Gastrocnemius medialis (tissue), 4 donors: ENCODE measurements at regions of chr21 and their contacts with region 1.

Region 1: DNA sequence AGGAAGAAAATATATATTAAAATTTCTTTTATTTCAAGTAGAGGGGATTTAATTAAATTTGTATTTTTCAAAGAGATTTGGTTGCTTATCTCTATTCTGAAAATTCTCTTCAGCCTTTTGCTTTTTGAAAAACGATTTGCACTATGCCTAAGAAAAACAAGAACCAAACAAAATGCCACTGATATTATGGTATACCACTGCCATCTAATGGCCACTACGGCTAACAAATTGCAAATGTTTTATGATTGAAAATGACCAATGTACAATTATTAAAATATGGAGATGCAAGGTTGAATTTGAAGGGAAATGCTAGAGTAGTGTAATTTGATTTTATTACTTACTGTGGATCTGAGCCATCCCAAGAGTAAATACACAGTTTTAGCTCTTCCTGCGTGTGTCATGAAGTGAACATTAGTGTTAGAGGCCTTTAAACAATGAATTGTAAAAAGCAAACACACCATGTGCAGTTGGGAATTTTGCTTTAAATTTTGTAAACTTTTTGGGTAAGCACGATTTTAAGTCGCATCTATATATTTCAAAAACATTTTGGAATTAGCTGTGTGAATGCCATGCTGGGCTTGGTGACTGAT is 137.4 kb upstream of the USP25 start:
- DNase-seq: no peak
- ATAC-seq: peak in 1 of 2 donors; percentile 51
- H3K4me3 ChIP-seq: no peak overlapping the region
- H3K27ac ChIP-seq: no peak overlapping the region
- H3K4me1 ChIP-seq: no peaks in the 10 kb centered on the region
- H3K27me3 ChIP-seq: no peaks in the 10 kb centered on the region
- CTCF ChIP-seq: peak; percentile 31 to 57 (median 49)
- POLR2A ChIP-seq: no peak

Region 2: GRCh38 chr21:14251336-14251735 is 1341.0 kb before region 1 on chr21:
- in situ Hi-C with region 1: loop called (anchors 10 kb)
- intact Hi-C with region 1: loop called (anchors 2 kb)
- DNase-seq: no peak
- ATAC-seq: no peak
- H3K4me3 ChIP-seq: no peak overlapping the region
- H3K27ac ChIP-seq: no peak overlapping the region
- H3K4me1 ChIP-seq: peaks cover 0 to 5% of the 10 kb centered on the region in 2 donors
- H3K27me3 ChIP-seq: no peaks in the 10 kb centered on the region
- CTCF ChIP-seq: no peak
- POLR2A ChIP-seq: no peak

Region 3: DNA sequence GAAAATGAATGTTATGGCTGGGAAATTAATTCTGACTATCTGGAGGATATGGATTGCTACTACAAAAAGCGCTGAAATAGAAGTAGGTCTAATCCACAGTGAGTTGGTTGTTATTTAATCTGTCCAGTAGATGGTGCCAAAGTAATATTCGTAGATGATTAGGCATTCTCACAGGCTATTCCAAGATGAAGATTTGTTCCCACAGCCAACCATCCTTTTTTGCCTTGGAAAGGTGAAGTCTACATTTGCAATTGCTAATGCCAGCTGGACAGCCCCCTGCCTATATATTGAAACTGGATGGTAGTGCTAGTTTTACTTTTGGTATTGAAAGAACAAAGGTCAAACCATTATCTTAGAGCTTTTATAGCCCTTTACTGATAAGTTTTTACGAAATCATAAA is 1332.6 kb before region 1 on chr21:
- in situ Hi-C with region 1: loop called (anchors 10 kb)
- intact Hi-C with region 1: no loop called
- DNase-seq: no peak
- ATAC-seq: peak; percentile 56 to 75
- H3K4me3 ChIP-seq: no peak overlapping the region
- H3K27ac ChIP-seq: no peak overlapping the region
- H3K4me1 ChIP-seq: no peaks in the 10 kb centered on the region
- H3K27me3 ChIP-seq: peaks cover 0 to 2% (median 0%) of the 10 kb centered on the region in 3 donors
- CTCF ChIP-seq: peak in 4 of 5 experiments; percentile 36 to 65 (median 46)
- POLR2A ChIP-seq: no peak

Region 4: DNA sequence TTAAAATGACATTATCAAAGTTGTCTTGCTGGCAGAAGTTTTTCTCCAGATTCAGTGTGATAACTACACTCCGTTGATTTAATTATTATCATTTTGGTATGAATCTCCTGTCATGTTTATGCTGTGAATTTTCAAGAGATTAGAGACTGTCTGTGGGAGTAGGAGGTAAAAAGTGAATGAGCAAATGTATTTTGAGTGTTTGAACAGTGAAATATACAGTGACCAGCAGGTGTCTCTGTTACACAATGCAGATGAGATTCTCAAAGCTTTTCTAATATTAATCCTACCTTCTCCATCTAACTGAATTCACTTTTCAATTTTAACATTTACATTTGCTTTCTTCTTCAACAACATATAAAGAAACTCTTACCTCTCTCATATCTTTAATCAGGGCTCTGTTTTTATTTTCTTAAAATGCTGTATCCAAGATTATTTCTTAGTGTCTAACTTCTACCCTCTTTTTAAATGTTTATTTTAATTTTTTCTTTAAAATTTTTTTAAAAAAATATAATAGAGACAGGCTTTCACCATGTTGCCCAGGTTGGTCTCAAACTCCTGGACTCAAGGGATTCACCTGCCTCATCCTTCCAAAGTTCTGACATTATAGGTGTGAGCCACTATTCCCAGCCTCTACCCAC is 1188.6 kb before region 1 on chr21:
- in situ Hi-C with region 1: loop called in 3 of 4 experiments (anchors 10 to 25 kb)
- intact Hi-C with region 1: loop called (anchors 5 kb)
- DNase-seq: no peak
- ATAC-seq: no peak
- H3K4me3 ChIP-seq: no peak overlapping the region
- H3K27ac ChIP-seq: no peak overlapping the region
- H3K4me1 ChIP-seq: no peaks in the 10 kb centered on the region
- H3K27me3 ChIP-seq: no peaks in the 10 kb centered on the region
- CTCF ChIP-seq: peak in 3 of 5 experiments; percentile 13 to 38 (median 31)
- POLR2A ChIP-seq: no peak

Region 5: GRCh38 chr21:14438211-14438610 is 1154.2 kb before region 1 on chr21:
- in situ Hi-C with region 1: loop called in 1 of 4 experiments (anchors 25 kb)
- intact Hi-C with region 1: no loop called
- DNase-seq: no peak
- ATAC-seq: no peak
- H3K4me3 ChIP-seq: no peak overlapping the region
- H3K27ac ChIP-seq: no peak overlapping the region
- H3K4me1 ChIP-seq: no peaks in the 10 kb centered on the region
- H3K27me3 ChIP-seq: no peaks in the 10 kb centered on the region
- CTCF ChIP-seq: no peak
- POLR2A ChIP-seq: no peak

Region 6: DNA sequence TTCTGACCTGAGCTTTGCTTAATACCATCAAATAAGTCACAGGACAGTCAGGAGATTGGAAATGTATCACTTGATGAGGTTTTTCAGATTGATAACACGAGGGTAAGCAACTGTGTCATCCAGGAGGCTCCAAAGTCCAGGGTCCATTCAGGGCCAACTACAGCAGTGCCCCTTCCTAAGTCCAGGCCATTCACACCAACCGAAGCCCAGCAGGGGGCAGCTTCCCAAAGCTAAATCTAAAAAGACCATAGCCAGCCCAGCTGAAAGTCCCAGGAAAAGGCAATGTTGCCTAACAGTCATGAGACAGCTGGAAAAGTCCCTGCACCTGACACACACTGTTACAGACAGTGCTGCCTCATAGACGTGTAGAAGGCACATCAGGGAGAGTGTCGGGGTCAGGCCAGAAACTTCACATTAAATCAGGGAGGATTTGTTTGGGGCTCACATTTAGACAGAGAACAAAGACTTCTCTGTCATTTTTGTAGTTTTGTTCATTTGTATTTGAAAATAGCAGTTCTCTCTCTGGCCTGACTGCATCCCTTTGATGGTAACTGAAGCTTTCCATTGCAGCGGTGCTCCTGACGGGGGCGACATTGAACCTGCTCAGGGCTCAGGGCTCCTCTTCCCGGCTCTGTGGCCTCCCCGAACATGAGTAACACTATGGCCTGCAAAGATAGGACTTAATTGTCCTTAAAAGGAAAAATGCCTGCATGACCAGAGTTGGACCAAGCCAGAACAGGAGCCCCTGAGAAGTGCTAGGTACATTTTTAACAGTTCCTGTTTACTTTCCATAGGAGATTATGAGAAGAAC is 728.0 kb before region 1 on chr21:
- in situ Hi-C with region 1: no loop called
- intact Hi-C with region 1: loop called (anchors 5 kb)
- DNase-seq: peak; percentile 59 to 76
- ATAC-seq: peak; percentile 97 to 98
- H3K4me3 ChIP-seq: no peak overlapping the region
- H3K27ac ChIP-seq: peak overlapping the region in 2 of 4 donors; percentile 8 to 34
- H3K4me1 ChIP-seq: peaks cover 13% of the 10 kb centered on the region in 2 donors
- H3K27me3 ChIP-seq: no peaks in the 10 kb centered on the region
- CTCF ChIP-seq: peak; percentile 41 to 74 (median 56)
- POLR2A ChIP-seq: no peak

Region 7: DNA sequence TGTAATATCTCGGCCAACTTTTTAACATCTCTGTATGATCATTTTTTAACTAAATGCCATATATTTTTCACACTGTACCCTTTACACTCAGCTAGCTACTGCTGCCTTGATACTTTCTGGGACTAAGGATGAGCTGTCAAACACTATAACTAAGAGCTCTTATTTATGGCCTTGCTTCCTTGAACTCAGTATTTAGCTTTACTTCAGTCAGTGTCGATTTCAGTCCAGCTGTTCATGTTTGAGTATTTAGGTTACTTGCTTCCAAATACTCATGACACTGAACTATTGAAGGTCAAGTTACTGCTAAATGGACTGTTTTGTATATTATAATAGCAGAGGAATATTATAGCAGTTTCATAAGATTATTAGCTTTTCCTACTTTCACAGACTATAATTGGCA is 111.6 kb after region 1 on chr21:
- in situ Hi-C with region 1: no loop called
- intact Hi-C with region 1: no loop called
- DNase-seq: no peak
- ATAC-seq: peak; percentile 67 to 82
- H3K4me3 ChIP-seq: no peak overlapping the region
- H3K27ac ChIP-seq: peak overlapping the region in 1 of 4 donors; percentile 31
- H3K4me1 ChIP-seq: peaks cover 3 to 8% of the 10 kb centered on the region in 2 donors
- H3K27me3 ChIP-seq: no peaks in the 10 kb centered on the region
- CTCF ChIP-seq: no peak
- POLR2A ChIP-seq: no peak

Region 8: GRCh38 chr21:15761507-15762100 is 169.2 kb after region 1 on chr21:
- in situ Hi-C with region 1: no loop called
- intact Hi-C with region 1: no loop called
- DNase-seq: no peak
- ATAC-seq: no peak
- H3K4me3 ChIP-seq: no peak overlapping the region
- H3K27ac ChIP-seq: no peak overlapping the region
- H3K4me1 ChIP-seq: peaks cover 61 to 78% of the 10 kb centered on the region in 2 donors
- H3K27me3 ChIP-seq: no peaks in the 10 kb centered on the region
- CTCF ChIP-seq: no peak
- POLR2A ChIP-seq: no peak